Psoas muscle (tissue), 8 donors: ENCODE measurements at regions of chr7 and their contacts with region 1.

Region 1: DNA sequence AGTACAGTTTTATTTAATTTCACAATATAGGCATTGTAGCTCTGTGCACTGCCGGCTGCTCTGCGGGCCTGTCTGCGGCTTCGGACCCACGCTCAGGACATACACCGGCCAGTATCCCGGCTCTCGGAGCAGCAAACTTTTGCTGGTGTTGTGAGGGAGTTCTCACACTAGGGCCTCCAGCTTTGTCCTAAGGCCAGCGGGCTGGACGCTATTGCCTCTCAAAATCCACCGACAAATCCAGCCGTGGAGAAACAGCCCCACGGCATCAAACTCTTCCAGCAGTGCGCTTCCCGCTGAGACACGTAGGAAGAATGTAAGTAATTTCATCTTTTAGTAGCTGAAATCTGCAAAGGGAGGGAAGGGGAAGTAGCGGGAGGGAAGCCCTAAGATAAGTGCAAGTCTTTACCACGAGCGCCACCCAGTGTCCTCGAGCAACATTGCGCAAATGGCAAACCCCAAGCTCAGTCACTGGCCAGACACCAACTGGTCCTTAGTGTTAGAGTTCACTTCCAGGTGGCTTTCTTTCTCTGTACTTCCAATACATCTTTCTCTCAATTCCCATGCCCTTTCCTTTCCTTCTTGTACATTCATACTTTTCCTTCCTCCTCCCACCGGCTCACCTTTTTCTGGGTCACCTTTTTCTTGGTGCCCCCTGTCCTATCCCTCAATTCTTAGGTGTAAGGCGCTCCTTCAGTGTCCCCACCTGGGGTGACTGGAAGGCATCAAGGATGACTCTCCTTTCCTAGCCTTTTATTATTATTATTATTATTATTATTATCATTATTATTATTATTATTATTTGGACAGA is 3.0 kb upstream of the DLX5 start:
- DNase-seq: peak; percentile 75 to 82
- ATAC-seq: peak; percentile 83 to 95 (median 89)
- H3K4me3 ChIP-seq: peak overlapping the region; percentile 52
- H3K27ac ChIP-seq: no peak overlapping the region
- H3K4me1 ChIP-seq: peaks cover 7% of the 10 kb centered on the region
- H3K27me3 ChIP-seq: peaks cover 3 to 68% (median 36%) of the 10 kb centered on the region in 3 donors
- CTCF ChIP-seq: peak; percentile 84

Region 2: DNA sequence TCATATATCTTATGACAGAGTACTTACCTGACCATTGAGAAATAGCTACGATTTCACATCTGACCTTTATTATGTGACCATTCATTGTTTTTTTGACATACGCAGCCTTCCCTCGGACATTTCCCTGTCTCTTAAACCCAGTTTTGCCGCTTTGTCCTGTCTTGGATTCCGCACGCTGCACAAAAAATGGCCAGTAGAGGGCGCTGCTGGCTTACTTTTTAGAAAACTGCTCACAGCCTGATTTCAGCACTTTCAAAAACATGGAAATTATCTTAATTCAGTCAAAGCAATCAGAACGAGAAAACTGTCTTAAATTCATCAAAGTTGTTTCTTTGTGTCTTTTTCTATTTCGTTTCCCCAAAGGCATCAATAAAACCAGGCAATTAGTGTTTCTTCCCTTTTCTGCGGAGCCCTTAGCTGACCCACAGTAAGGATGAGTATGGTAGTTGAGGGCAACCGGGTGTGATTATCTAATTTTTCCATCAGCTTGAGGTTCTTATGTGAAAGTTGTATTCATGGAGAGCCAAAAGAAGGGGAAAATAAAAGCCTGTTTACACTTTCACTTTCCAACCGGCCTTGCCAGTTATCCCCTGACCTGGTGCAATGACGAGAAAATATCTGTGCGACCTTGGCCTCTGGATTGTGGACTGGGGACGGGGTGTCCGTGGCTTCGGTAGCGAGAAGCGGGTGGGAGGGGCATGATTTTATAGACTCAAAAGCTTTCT is 1110.9 kb before region 1 on chr7:
- intact Hi-C with region 1: loop called (anchors 2 kb)
- DNase-seq: peak; percentile 73 to 80
- ATAC-seq: peak; percentile 61 to 86 (median 68)
- H3K4me3 ChIP-seq: no peak overlapping the region
- H3K27ac ChIP-seq: no peak overlapping the region
- H3K4me1 ChIP-seq: no peaks in the 10 kb centered on the region
- H3K27me3 ChIP-seq: peaks cover 0 to 2% (median 0%) of the 10 kb centered on the region in 3 donors
- CTCF ChIP-seq: peak; percentile 95

Region 3: GRCh38 chr7:96075510-96076349 is 951.9 kb before region 1 on chr7:
- intact Hi-C with region 1: loop called (anchors 1 to 5 kb)
- DNase-seq: peak; percentile 53 to 69
- ATAC-seq: peak; percentile 67 to 96 (median 86)
- H3K4me3 ChIP-seq: peak overlapping the region; percentile 61
- H3K27ac ChIP-seq: no peak overlapping the region
- H3K4me1 ChIP-seq: peaks cover 5% of the 10 kb centered on the region
- H3K27me3 ChIP-seq: peaks cover 3 to 11% (median 3%) of the 10 kb centered on the region in 3 donors
- CTCF ChIP-seq: peak; percentile 80

Region 4: DNA sequence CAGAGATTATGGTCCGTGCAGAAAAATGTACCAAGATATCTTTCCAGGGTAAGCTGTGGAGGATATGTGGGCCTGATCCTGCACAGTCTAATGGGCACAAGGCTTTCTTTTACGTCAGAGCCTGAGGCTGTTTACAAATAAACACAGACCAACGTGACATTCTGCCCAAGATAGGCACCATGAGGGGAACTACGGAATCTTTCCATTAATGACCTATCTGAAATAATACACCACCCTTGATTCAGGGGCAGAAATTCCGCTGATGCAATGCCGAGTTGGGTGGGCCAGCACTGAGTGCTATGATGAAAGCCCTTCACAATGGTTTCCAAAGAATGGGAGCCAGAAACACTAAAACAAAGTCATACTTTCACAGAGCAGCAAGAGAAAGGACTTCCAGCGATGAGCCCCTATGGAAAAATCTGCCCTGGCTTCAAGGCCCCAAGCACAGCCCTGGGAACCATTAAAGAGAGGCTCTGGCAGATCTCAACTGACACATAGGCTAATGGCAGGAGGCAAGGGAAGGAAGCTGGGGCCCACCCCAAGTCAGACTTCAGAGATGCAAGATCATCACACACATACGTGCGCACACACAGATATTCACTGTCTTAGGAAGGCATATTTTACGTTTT is 94.5 kb before region 1 on chr7:
- intact Hi-C with region 1: no loop called
- DNase-seq: no peak
- ATAC-seq: no peak
- H3K4me3 ChIP-seq: no peak overlapping the region
- H3K27ac ChIP-seq: no peak overlapping the region
- H3K4me1 ChIP-seq: no peaks in the 10 kb centered on the region
- H3K27me3 ChIP-seq: no peaks in the 10 kb centered on the region
- CTCF ChIP-seq: no peak

Region 5: GRCh38 chr7:97174303-97174702 is 146.7 kb after region 1 on chr7:
- intact Hi-C with region 1: no loop called
- DNase-seq: no peak
- ATAC-seq: no peak
- H3K4me3 ChIP-seq: no peak overlapping the region
- H3K27ac ChIP-seq: no peak overlapping the region
- H3K4me1 ChIP-seq: no peaks in the 10 kb centered on the region
- H3K27me3 ChIP-seq: no peaks in the 10 kb centered on the region
- CTCF ChIP-seq: no peak

Region 6: DNA sequence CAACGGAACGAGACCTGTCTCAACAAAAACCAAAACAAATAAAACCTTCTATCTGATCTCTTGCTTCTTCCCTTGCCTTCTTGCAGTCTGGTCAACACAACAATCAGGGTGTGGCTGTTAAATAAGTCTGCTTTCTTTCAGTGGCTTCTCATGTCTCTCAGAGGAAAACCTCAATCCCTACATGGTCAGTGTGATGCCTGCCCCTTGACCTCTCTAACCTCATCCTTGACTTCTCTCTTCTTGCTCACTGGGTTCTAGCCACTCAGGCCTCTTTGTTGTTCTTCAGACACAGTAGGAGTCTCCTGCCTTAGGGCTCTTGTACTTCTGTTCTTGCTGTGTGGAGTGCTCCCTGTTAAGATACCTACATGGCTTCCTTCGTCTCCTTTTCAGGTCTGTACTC is 310.2 kb after region 1 on chr7:
- intact Hi-C with region 1: no loop called
- DNase-seq: no peak
- ATAC-seq: no peak
- H3K4me3 ChIP-seq: no peak overlapping the region
- H3K27ac ChIP-seq: no peak overlapping the region
- H3K4me1 ChIP-seq: no peaks in the 10 kb centered on the region
- H3K27me3 ChIP-seq: no peaks in the 10 kb centered on the region
- CTCF ChIP-seq: no peak